H1 (cell line): ENCODE measurements at regions of chr13 and their contacts with region 1.

Region 1: GRCh38 chr13:32267836-32268439 is 47.2 kb downstream of the ZAR1L start:
- DNase-seq: peak; percentile 65 to 90
- H3K4me3 ChIP-seq: no peak overlapping the region
- H3K27ac ChIP-seq: no peak overlapping the region
- H3K4me1 ChIP-seq: no peaks in the 10 kb centered on the region
- H3K27me3 ChIP-seq: no peaks in the 10 kb centered on the region
- CTCF ChIP-seq: peak; percentile 82 to 99 (median 98)
- EP300 ChIP-seq: no peak
- POLR2A ChIP-seq: no peak
- RAD21 ChIP-seq: peak; percentile 65 to 76

Region 2: GRCh38 chr13:32246468-32246867 is 21.5 kb before region 1 on chr13:
- CTCF ChIA-PET with region 1: interaction called, 15 read pairs
- POLR2A ChIA-PET with region 1: no interaction called
- DNase-seq: peak; percentile 56 to 80
- H3K4me3 ChIP-seq: no peak overlapping the region
- H3K27ac ChIP-seq: no peak overlapping the region
- H3K4me1 ChIP-seq: no peaks in the 10 kb centered on the region; a peak in 1 of 7 replicates
- H3K27me3 ChIP-seq: no peaks in the 10 kb centered on the region
- CTCF ChIP-seq: peak; percentile 80 to 88 (median 81)
- EP300 ChIP-seq: no peak
- POLR2A ChIP-seq: no peak
- RAD21 ChIP-seq: peak; percentile 65 to 74

Region 3: DNA sequence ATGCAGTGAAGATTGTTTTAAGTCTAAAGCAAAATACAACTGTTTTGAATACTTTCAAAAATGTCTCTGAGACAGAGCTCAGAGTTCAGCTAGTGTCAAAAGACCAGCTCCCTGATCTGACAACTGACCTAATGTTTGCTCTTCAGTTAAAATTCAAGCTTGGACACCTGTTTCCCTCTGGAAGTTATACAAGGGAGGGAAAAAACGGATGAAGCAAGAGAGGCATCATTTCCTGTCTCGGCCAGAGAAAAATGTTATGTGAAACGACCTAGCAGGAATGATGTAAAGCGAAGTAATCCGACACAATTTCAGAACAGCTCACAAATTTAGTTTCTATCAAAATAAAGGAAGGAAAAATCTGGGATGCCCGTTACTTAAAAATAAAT is 12.2 kb before region 1 on chr13:
- CTCF ChIA-PET with region 1: interaction called, 26 read pairs
- POLR2A ChIA-PET with region 1: no interaction called
- DNase-seq: no peak
- H3K4me3 ChIP-seq: no peak overlapping the region
- H3K27ac ChIP-seq: no peak overlapping the region
- H3K4me1 ChIP-seq: no peaks in the 10 kb centered on the region
- H3K27me3 ChIP-seq: no peaks in the 10 kb centered on the region
- CTCF ChIP-seq: no peak
- EP300 ChIP-seq: no peak
- POLR2A ChIP-seq: no peak
- RAD21 ChIP-seq: no peak

Region 4: GRCh38 chr13:32284927-32285632 is 17.1 kb after region 1 on chr13:
- CTCF ChIA-PET with region 1: interaction called, 25 read pairs
- POLR2A ChIA-PET with region 1: no interaction called
- DNase-seq: no peak
- H3K4me3 ChIP-seq: no peak overlapping the region
- H3K27ac ChIP-seq: no peak overlapping the region
- H3K4me1 ChIP-seq: no peaks in the 10 kb centered on the region
- H3K27me3 ChIP-seq: no peaks in the 10 kb centered on the region
- CTCF ChIP-seq: no peak
- EP300 ChIP-seq: no peak
- POLR2A ChIP-seq: no peak
- RAD21 ChIP-seq: no peak

Region 5: GRCh38 chr13:32310134-32310706 is 42.3 kb after region 1 on chr13:
- CTCF ChIA-PET with region 1: interaction called, 35 read pairs
- POLR2A ChIA-PET with region 1: interaction called, 9 read pairs
- DNase-seq: peak in 1 of 2 experiments; percentile 47
- H3K4me3 ChIP-seq: no peak overlapping the region
- H3K27ac ChIP-seq: no peak overlapping the region
- H3K4me1 ChIP-seq: peaks cover 0 to 5% (median under 1%) of the 10 kb centered on the region in 4 experiments; a peak in 5 of 7 replicates
- H3K27me3 ChIP-seq: no peaks in the 10 kb centered on the region
- CTCF ChIP-seq: peak in 2 of 3 experiments; percentile 59 to 75; a peak in 3 of 4 replicates
- EP300 ChIP-seq: no peak
- POLR2A ChIP-seq: no peak
- RAD21 ChIP-seq: peak; percentile 67